ENCODE measurements at regions of chr15 and their contacts with region 1.

Region 1: DNA sequence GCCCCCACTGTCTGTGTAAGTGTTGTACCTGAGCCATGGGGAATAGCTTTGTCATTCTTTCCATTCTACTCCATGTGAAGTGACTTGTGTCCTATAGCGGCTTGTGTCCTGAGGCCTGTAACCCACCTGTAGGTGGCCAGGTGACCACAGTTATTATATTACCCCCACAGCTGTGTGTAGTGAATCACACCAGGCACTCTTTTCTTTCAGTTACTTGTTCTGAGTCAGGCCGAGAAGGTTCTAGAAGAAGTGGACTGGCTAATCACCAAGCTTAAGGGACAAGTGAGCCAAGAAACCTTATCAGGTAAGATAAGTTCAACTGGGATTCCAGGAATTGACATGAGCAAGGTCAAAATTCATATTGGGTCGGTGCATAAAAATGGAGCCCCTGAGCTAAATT is 29.2 kb downstream of the POLG start:
- H3K4me3 ChIP-seq: no peak overlapping the region
- H3K27ac ChIP-seq: no peak overlapping the region
- H3K4me1 ChIP-seq: no peaks in the 10 kb centered on the region
- CTCF ChIP-seq: no peak

Region 2: GRCh38 chr15:89243046-89243690 is 62.2 kb before region 1 on chr15:
- CTCF ChIA-PET with region 1: no interaction called
- POLR2A ChIA-PET with region 1: no interaction called
- H3K4me3 ChIP-seq: peak overlapping the region; percentile 71
- H3K27ac ChIP-seq: peak overlapping the region; percentile 68; the same call in 1 of the 2 replicates
- H3K4me1 ChIP-seq: peaks cover 8% of the 10 kb centered on the region
- CTCF ChIP-seq: no peak

Region 3: GRCh38 chr15:89293012-89293411 is 12.4 kb before region 1 on chr15:
- CTCF ChIA-PET with region 1: interaction called, 12 read pairs
- POLR2A ChIA-PET with region 1: no interaction called
- H3K4me3 ChIP-seq: no peak overlapping the region
- H3K27ac ChIP-seq: no peak overlapping the region
- H3K4me1 ChIP-seq: no peaks in the 10 kb centered on the region
- CTCF ChIP-seq: no peak

Measured in HEK293 (cell line).